ENCODE measurements at regions of chr19 and their contacts with region 1.

Region 1: GRCh38 chr19:14073261-14073924 is 807 bp downstream of the MISP3 start:
- DNase-seq: peak; percentile 59 to 68
- H3K4me3 ChIP-seq: peak overlapping the region; percentile 63 to 73 (median 71)
- H3K27ac ChIP-seq: peak overlapping the region; percentile 86 to 93
- H3K4me1 ChIP-seq: no peaks in the 10 kb centered on the region
- H3K27me3 ChIP-seq: no peaks in the 10 kb centered on the region
- CTCF ChIP-seq: peak in 1 of 3 donors; percentile 94
- POLR2A ChIP-seq: no peak

Region 2: DNA sequence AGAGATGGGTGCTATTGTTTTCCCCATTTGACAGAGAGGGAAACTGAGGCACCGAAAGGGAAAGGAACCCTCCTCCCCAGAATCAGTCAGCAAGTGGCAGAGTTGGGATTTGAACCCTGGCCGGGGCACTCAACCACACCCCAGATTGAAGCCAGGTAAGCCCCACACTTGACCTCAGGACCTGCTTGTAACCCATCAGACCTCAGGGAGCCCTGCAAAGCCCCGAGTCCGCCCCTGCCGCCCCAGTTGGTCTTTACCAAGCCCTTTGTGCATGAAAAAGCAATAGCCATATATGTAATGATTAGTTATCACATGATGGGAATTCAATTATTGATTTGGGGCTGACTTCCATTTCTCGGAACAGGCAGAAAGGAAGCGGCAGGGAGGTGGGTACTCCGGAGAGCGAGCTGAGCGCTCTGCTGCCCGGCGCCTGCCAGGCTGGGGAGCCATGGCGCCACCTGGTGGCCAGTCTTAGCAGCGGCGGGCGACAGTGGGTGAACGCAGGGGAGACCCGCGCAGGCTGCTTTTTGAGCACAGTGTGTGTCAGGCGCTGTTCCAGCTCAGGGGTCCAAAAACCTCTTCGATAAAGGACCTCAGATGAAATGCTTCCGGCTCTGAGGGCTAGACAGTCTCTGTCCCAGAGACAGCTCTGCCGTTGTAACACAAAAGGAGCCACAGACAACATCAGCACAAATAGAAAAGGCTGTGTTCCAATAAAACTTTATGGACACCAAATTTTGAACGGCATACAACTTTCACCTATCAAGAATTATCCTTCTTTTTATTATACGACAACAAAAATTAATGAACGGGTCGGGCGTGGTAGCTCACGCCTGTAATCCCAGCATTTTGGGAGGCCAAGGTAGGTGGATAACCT is 484.2 kb before region 1 on chr19:
- intact Hi-C with region 1: no loop called
- DNase-seq: peak; percentile 41 to 69
- H3K4me3 ChIP-seq: no peak overlapping the region
- H3K27ac ChIP-seq: no peak overlapping the region
- H3K4me1 ChIP-seq: no peaks in the 10 kb centered on the region
- H3K27me3 ChIP-seq: peaks cover 0 to 18% of the 10 kb centered on the region in 2 donors
- CTCF ChIP-seq: peak; percentile 40 to 89 (median 89)
- POLR2A ChIP-seq: no peak

Region 3: GRCh38 chr19:13880059-13881043 is 193.0 kb before region 1 on chr19:
- intact Hi-C with region 1: loop called (anchors 10 kb)
- DNase-seq: peak; percentile 97 to 98
- H3K4me3 ChIP-seq: peak overlapping the region in 2 of 3 donors; percentile 32 to 51
- H3K27ac ChIP-seq: peak overlapping the region; percentile 95 to 97
- H3K4me1 ChIP-seq: peaks cover 4 to 40% of the 10 kb centered on the region in 2 donors
- H3K27me3 ChIP-seq: no peaks in the 10 kb centered on the region
- CTCF ChIP-seq: peak; percentile 98 to 100 (median 100)
- POLR2A ChIP-seq: no peak

Region 4: DNA sequence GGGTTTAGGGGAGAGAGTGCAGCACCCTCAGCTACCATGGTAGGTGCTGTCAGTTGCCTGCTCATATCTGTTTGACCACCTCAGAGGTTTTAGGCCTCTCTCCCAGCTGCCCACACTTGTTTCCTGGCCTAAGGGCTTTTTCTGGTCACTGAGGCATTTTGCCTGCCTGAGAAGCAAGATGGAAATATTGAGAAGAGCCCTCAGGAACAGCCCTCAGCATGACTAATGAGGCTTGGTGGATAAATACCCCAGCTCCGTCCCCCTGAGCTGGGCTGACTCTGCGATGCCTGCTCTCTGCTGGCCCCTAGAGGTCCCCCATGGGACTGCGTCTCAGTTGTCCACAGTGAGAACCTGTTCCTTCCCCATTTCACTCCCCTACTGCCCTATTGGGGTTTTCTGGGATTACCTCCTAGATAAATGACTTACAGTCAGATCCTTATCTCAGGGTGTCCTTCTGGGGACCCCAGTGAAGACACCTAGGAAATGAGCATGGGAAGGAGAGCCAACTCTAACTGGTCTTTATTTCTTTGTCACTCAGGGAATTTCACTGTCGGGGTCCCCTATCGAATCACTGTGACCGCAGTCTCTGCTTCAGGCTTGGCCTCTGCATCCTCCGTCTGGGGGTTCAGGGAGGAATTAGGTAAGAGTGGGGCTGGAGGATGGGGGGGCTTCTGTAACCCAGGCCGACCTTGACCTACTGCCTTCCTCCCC is 24.8 kb before region 1 on chr19:
- intact Hi-C with region 1: no loop called
- DNase-seq: no peak
- H3K4me3 ChIP-seq: no peak overlapping the region
- H3K27ac ChIP-seq: no peak overlapping the region
- H3K4me1 ChIP-seq: no peaks in the 10 kb centered on the region
- H3K27me3 ChIP-seq: no peaks in the 10 kb centered on the region
- CTCF ChIP-seq: peak; percentile 44 to 56 (median 45)
- POLR2A ChIP-seq: no peak

Region 5: DNA sequence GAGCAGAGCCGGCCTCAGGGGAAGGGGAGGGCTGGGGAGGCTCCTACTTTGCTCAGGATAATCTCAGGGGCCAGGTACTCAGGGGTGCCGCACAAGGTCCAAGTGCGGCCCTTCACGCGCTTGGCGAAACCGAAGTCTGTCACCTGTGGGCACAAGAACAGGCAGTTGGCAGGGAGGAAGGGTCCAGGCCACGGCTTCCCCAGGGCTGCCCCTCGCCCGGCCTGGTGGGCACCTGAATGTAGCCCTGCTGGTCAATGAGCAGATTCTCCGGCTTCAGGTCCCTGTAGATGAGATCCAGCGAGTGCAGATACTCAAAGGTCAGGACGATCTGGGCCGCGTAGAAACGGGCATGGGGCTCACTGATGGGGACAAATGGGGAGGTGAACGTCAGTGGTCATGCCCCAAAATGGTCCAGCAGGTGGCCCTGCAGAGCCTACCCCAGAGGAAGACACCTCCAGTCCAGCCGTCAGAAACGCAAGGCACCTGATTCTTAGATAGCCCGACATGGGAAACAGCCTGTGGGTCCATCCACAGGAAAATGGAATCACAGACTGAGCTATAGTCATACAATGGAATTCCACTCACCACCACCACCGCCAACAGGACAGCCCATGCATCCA is 24.2 kb after region 1 on chr19:
- intact Hi-C with region 1: no loop called
- DNase-seq: no peak
- H3K4me3 ChIP-seq: no peak overlapping the region
- H3K27ac ChIP-seq: no peak overlapping the region
- H3K4me1 ChIP-seq: no peaks in the 10 kb centered on the region
- H3K27me3 ChIP-seq: no peaks in the 10 kb centered on the region
- CTCF ChIP-seq: no peak
- POLR2A ChIP-seq: no peak

Region 6: GRCh38 chr19:14119637-14120496 is 46.5 kb after region 1 on chr19:
- intact Hi-C with region 1: loop called (anchors 1 kb)
- DNase-seq: no peak
- H3K4me3 ChIP-seq: no peak overlapping the region
- H3K27ac ChIP-seq: peak overlapping the region; percentile 98 to 100
- H3K4me1 ChIP-seq: peaks cover 13 to 21% of the 10 kb centered on the region in 2 donors
- H3K27me3 ChIP-seq: no peaks in the 10 kb centered on the region
- CTCF ChIP-seq: no peak
- POLR2A ChIP-seq: no peak

Region 7: DNA sequence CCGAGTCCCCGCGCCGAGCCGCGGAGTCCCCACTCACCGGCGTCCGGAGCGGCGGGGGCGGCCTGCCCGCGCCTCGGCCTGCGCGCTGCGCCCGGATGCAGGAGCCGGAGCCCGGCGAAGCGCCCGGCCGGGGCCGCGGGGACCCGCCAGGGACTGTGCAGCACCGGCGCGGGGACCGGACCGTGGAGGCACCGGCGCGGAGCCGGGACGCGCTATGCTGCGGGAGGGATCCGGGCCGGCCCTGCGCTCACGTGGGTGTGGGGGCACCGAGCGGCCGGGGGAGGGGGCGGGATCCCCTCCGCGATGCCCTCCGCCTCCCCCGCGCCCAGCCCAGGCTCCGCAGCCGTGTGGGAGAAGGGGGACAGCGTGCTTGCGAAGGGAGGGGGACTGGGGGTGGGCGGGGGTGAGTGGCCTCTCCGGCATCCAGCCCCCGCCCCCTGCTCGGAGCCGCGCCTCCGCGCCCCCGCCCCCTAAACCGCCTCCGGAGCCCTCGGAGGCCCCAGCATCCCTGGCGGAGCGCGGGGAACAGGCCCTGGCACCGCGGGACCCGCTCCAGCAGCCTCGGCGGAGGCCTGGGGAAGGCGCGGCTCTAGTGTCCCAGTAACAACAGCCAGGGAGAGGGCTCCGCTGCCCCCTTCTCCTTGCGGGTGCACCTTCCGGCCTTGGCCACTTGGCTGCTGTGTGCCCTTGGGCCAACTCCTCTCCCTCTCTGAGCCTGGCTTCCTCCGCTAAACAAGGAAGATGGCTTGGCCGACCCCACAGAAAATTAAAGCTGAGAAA is 906.3 kb after region 1 on chr19 and contains the start of gene SLC1A6:
- intact Hi-C with region 1: no loop called
- DNase-seq: no peak
- H3K4me3 ChIP-seq: peak within 1 kb of the TSS in 2 of 3 donors; percentile 47 to 60
- H3K27ac ChIP-seq: no peak within 1 kb of the TSS
- H3K4me1 ChIP-seq: no peaks in the 10 kb centered on the region
- H3K27me3 ChIP-seq: peaks cover 0 to 42% of the 10 kb centered on the region in 2 donors
- CTCF ChIP-seq: no peak
- POLR2A ChIP-seq: no peak
- total RNA-seq, gene SLC1A6: not detected